BJ (cell line): ENCODE measurements at regions of chr1 and their contacts with region 1.

Region 1: DNA sequence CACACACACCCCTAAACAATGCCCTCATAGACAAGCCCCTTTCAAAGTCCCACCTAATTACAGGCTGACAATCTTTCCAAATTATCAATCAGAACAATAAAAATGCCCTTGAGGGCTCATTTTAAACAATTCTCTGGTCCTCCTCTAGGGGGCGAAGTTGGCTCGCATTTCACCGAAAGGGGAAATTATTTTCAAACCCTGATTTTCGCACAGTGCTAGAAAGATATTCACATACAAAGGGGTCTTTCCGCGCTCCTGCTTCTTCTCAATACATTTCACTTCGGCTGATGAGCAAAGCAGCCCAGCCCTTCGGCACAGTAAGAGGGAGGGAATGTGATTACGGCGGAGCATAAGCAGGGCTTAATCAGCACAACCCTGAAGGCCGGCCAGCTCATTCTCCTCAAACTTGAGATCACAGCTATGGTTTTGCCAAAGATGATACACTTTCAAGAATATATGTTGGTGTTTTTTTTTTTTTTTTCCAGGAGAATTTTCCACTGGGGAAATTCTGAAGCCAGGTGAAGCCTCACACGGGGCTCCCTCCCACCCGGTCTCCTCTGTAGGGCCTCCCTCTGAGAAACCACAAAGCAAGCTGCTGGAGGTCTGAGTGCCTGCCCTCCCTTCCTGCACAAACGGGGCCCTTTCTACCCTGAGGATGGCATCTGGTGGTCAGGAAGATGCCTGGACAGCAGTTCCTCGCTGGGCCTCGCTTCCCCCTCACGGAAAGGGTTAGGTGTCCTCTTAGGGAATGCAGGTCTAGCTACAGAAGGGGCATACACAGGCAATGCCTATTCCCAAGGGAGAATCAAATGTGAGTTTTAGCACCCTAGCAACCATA is 66.9 kb downstream of the GNG12 start:
- DNase-seq: peak; percentile 35
- H3K4me3 ChIP-seq: peak overlapping the region; percentile 2; the same call in 1 of the 2 replicates
- H3K27me3 ChIP-seq: no peaks in the 10 kb centered on the region
- CTCF ChIP-seq: peak; percentile 68

Region 2: GRCh38 chr1:67540733-67541125 is 225.6 kb before region 1 on chr1:
- CTCF ChIA-PET with region 1: interaction called, 233 read pairs
- POLR2A ChIA-PET with region 1: no interaction called
- DNase-seq: no peak
- H3K4me3 ChIP-seq: no peak overlapping the region
- H3K27me3 ChIP-seq: no peaks in the 10 kb centered on the region
- CTCF ChIP-seq: no peak

Region 3: DNA sequence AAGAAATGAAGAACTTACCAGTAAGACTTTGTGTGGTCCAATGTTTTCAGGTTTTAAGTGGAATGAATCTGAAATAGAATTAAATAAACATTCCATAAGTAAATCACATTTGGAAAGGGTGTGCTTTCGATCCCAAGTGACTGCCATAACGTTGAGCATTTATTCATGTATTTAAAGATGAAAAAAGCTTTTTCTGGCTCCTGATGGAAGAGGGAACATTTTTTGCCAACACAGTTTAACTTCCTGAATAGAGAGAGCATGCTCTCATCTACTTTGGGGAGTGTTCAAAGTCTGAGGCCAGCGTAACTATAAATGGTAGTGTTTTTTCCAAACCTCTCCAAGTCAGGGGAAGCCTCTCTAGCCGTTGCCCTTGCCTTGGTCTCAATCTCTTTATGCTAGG is 11.1 kb after region 1 on chr1:
- CTCF ChIA-PET with region 1: interaction called, 14 read pairs
- POLR2A ChIA-PET with region 1: no interaction called
- DNase-seq: no peak
- H3K4me3 ChIP-seq: no peak overlapping the region
- H3K27me3 ChIP-seq: no peaks in the 10 kb centered on the region
- CTCF ChIP-seq: no peak

Region 4: DNA sequence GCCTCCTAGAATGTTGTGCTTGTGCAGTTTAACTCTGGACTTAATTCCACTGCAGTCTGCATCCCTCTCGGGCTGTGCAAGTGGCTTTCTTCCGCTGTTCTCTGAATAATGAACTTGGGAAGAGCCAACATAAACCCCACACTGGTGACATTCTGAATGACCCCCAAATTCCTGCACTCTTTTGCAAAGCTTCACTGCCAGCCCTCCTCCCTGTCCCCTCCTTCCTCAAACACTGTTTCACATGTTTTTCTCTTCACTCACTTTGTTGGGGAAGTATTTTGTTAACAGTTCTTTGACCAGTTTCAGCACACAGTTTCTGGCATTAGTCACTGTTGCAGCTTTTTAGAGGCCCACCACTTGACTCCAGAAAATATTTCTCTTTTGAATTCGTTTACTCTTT is 27.2 kb after region 1 on chr1:
- CTCF ChIA-PET with region 1: interaction called, 15 read pairs
- POLR2A ChIA-PET with region 1: no interaction called
- DNase-seq: peak; percentile 55
- H3K4me3 ChIP-seq: no peak overlapping the region
- H3K27me3 ChIP-seq: no peaks in the 10 kb centered on the region
- CTCF ChIP-seq: no peak

Region 5: DNA sequence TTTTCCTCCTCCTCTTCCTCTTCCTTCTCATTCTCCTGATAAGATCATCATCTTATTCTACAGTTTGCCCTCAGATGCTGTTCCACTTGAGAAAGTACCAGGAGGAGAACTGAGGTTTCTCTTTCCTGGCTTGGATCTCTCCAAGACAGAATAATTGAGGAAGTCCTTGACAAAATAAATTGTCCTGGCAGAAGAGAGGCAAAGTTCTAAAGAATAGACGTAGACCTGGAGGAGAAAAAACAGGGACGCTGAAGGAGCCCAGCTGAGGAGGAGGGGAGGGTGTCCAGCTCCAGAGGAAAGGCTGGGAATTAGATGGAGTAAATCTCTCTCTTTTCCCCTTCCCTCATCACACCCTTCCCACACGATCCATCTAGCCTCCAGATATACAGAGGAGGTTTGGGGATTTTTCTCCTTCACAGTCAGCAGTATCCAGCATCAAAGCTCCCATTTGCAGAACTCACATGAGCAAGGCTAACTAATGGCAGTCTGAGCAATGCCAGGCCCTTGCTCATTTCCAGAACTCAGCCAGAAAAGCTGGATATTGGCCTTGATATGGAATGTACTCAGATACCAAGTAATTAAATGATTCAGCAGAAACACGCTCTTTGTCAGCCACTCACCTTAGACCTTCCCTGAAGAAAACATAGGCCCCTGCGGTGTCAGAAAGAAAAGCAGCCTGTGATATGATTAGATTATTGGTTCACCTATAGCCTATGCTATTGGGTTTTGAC is 72.0 kb after region 1 on chr1:
- CTCF ChIA-PET with region 1: interaction called, 13 read pairs
- POLR2A ChIA-PET with region 1: interaction called, 5 read pairs
- DNase-seq: no peak
- H3K4me3 ChIP-seq: no peak overlapping the region
- H3K27me3 ChIP-seq: no peaks in the 10 kb centered on the region
- CTCF ChIP-seq: no peak

Region 6: DNA sequence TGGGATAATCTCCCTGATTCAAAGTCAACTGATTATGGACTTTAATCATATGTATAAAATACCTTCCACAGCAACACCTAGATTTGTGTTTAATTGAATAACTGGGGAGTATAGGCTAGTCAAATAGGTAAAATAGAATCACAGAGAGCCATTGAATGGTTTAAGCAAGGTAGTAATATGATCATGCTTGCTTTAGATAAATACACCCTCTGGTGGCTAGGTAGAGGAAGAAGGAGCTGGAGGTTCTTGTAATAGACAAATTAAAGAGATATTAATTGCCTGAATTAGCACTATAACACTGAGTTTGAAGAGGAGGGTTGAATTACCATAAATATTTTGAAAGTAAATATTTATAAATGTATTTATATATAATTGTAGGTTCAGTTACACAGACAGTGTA is 243.7 kb after region 1 on chr1:
- CTCF ChIA-PET with region 1: interaction called, 16 read pairs
- POLR2A ChIA-PET with region 1: no interaction called
- DNase-seq: no peak
- H3K4me3 ChIP-seq: no peak overlapping the region
- H3K27me3 ChIP-seq: no peaks in the 10 kb centered on the region
- CTCF ChIP-seq: peak; percentile 38; the same call in 1 of the 2 replicates